A549 (cell line): ENCODE measurements at regions of chr3 and their contacts with region 1.

Region 1: DNA sequence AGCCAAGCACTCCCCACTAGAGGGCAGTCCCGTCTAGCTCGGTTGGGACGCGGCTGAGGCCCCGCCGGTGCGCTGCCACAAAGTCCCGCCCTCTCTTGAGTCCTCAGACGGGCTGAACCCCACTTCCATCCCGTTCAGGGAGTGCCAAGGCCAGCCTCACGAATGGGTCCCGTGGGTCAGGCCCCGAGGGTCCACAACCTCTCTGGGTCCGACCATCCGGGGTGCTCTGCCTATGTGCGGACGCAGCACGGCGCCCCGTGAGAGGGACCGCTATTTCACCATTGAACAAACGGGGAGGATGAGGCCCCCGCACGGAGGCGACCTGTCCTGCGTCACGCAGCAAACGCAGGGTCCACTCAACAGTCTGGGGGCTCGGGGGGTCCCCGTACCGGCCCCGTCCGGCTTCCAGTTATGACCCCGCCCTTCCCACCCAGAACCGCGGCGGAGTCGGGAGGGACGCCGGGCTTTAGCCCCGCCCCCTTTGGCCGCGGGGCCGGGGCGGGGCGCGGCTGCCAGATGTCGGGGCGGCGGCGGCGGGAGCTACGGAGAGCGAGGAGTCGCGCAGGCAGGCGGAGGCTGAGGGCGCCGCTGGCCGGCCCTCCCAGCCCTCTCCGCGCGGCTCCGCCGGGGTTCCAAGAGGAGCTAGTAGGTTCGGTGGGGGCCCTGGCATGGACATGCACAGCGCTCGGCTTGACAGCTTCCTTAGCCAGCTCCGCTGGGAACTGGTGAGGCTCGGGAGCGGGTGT is at the start of gene INKA1:
- DNase-seq: peak; percentile 70 to 81
- ATAC-seq: peak; percentile 78 to 85
- H3K4me3 ChIP-seq: peak within 1 kb of the TSS; percentile 80
- H3K27ac ChIP-seq: peak within 1 kb of the TSS; percentile 76 to 88
- H3K4me1 ChIP-seq: peaks cover 14% of the 10 kb centered on the region
- CTCF ChIP-seq: peak; percentile 68
- EP300 ChIP-seq: no peak
- POLR2A ChIP-seq: no peak
- RAD21 ChIP-seq: peak; percentile 75 to 82
- polyA plus RNA-seq, gene INKA1: 0.21 and 0.39 TPM in 2 replicates

Region 2: GRCh38 chr3:49638445-49638844 is 164.4 kb before region 1 on chr3:
- CTCF ChIA-PET with region 1: no interaction called
- POLR2A ChIA-PET with region 1: no interaction called
- DNase-seq: peak; percentile 6 to 57
- ATAC-seq: peak; percentile 55 to 86; a peak in 4 of 6 replicates
- H3K4me3 ChIP-seq: no peak overlapping the region
- H3K27ac ChIP-seq: peak overlapping the region in 1 of 2 experiments; percentile 49; a peak in 2 of 6 replicates
- H3K4me1 ChIP-seq: peaks cover 10% of the 10 kb centered on the region; the same call in 2 of the 3 replicates
- CTCF ChIP-seq: no peak
- EP300 ChIP-seq: no peak
- POLR2A ChIP-seq: no peak
- RAD21 ChIP-seq: no peak

Region 3: DNA sequence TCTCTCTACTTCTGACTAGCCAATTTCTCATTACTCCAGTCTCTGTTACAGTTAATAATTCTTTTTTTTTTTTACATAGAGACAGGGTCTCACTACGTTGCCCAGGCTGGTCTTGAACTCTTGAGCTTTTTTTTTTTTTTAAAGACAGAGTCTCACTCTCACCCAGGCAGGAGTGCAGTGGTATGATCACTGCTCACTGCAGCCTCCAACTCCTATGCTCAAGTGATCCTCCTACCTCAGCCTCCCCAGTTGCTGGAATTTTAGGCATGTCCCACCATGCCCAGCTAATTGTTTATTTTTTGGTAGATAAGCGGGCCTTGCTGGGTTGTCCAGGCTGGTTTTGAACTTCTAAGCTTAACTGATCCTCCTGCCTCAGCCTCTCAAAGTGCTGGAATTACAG is 30.2 kb before region 1 on chr3:
- CTCF ChIA-PET with region 1: interaction called, 14 read pairs
- POLR2A ChIA-PET with region 1: no interaction called
- DNase-seq: no peak
- ATAC-seq: no peak
- H3K4me3 ChIP-seq: no peak overlapping the region
- H3K27ac ChIP-seq: no peak overlapping the region
- H3K4me1 ChIP-seq: peaks cover 9% of the 10 kb centered on the region; the same call in 2 of the 3 replicates
- CTCF ChIP-seq: no peak
- EP300 ChIP-seq: no peak
- POLR2A ChIP-seq: no peak
- RAD21 ChIP-seq: no peak

Region 4: GRCh38 chr3:49786241-49786958 is 16.5 kb before region 1 on chr3 and contains the start of gene IP6K1:
- CTCF ChIA-PET with region 1: interaction called, 11 read pairs
- POLR2A ChIA-PET with region 1: interaction called, 12 read pairs
- DNase-seq: peak; percentile 98 to 99
- ATAC-seq: peak; percentile 98 to 99
- H3K4me3 ChIP-seq: peak within 1 kb of the TSS; percentile 82
- H3K27ac ChIP-seq: peak within 1 kb of the TSS; percentile 87 to 95
- H3K4me1 ChIP-seq: peaks cover 11% of the 10 kb centered on the region
- CTCF ChIP-seq: no peak
- EP300 ChIP-seq: no peak
- POLR2A ChIP-seq: peak; percentile 89
- RAD21 ChIP-seq: no peak
- polyA plus RNA-seq, gene IP6K1: 22.2 and 28.9 TPM in 2 replicates

Region 5: DNA sequence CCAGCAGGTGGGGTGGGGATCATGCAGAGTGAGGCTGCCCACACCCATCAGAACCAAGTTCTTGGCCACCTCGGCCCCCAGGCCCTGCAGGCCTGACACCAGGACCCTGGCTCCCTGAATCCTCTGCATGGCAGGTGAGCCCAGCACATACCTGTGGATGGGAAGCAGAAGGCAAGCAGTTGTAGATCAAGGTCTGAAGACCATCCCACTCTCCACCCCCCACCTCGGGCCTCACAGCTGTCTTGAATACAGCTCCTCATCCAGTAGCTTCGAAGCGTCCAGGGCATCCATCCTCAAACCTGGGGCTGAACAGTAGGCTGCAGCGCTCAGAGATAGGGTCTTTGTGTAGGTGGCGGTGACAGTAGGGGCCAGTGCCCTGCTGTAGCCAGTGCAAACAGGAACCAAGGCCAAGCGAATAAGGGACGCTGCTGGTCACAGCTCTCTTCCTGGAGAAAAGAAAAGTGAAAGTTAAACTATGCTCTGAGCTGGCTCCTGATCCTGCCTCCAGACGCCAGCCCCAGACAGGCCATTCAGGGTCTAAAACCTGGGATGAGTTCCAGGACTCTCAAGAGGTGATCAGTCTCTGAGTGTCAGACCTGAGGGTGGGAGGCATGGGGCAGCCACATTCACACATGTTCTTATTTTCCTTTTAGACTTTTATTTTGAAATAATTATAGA is 10.7 kb after region 1 on chr3 and contains the start of gene UBA7:
- CTCF ChIA-PET with region 1: interaction called, 19 read pairs
- POLR2A ChIA-PET with region 1: no interaction called
- DNase-seq: no peak
- ATAC-seq: peak in 1 of 2 experiments; percentile 35; a peak in 2 of 6 replicates
- H3K4me3 ChIP-seq: no peak within 1 kb of the TSS
- H3K27ac ChIP-seq: no peak within 1 kb of the TSS
- H3K4me1 ChIP-seq: no peaks in the 10 kb centered on the region
- CTCF ChIP-seq: no peak
- EP300 ChIP-seq: no peak
- POLR2A ChIP-seq: no peak
- RAD21 ChIP-seq: no peak
- polyA plus RNA-seq, gene UBA7: 0.22 and 0.33 TPM in 2 replicates

Region 6: DNA sequence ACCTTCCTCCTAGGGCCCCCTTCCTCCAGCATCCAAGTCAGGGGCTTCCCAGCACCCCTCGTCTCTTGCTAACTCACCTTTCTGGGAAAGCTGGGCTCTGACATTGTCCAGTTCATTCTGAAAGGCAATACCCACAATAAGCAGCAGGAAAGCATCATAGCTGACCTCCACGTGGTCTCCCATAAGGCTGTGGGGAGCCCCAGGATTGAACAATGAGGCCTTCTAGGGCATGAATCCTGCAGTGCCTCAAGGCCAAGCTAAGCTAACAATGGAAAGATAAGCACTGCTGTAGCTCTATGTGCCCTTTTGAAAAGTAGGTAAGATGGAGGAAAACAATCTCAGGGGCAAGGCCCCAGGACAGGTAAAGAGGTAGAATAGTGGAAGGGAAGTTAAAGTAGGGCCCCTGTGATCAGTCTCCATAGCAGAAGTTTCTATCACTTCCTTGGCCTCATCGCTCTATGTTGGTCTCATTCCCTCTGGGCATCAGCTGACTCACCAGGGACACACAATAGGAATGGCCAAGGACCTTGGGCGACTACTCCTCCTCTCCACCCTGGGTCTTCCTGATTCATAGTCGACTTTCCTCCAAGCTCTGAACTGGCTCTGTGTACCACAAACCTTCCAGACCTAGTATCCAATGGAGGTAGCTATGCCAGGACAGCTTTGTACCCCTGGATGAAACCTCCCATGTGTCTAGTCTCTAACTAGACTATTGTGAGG is 41.7 kb after region 1 on chr3:
- CTCF ChIA-PET with region 1: interaction called, 119 read pairs
- POLR2A ChIA-PET with region 1: no interaction called
- DNase-seq: no peak
- ATAC-seq: no peak
- H3K4me3 ChIP-seq: no peak overlapping the region
- H3K27ac ChIP-seq: no peak overlapping the region
- H3K4me1 ChIP-seq: no peaks in the 10 kb centered on the region
- CTCF ChIP-seq: no peak
- EP300 ChIP-seq: no peak
- POLR2A ChIP-seq: no peak
- RAD21 ChIP-seq: no peak

Region 7: GRCh38 chr3:49867400-49867799 is 64.5 kb after region 1 on chr3:
- CTCF ChIA-PET with region 1: no interaction called
- POLR2A ChIA-PET with region 1: no interaction called
- DNase-seq: no peak
- ATAC-seq: no peak
- H3K4me3 ChIP-seq: no peak overlapping the region
- H3K27ac ChIP-seq: no peak overlapping the region
- H3K4me1 ChIP-seq: peaks cover 6% of the 10 kb centered on the region; the same call in 1 of the 3 replicates
- CTCF ChIP-seq: no peak
- EP300 ChIP-seq: no peak
- POLR2A ChIP-seq: no peak
- RAD21 ChIP-seq: no peak

Region 8: GRCh38 chr3:49906004-49906743 is 103.3 kb after region 1 on chr3:
- CTCF ChIA-PET with region 1: interaction called, 26 read pairs
- POLR2A ChIA-PET with region 1: interaction called, 3 read pairs
- DNase-seq: peak; percentile 55 to 82
- ATAC-seq: peak; percentile 63 to 74; a peak in 5 of 6 replicates
- H3K4me3 ChIP-seq: peak overlapping the region; percentile 24; the same call in 1 of the 3 replicates
- H3K27ac ChIP-seq: peak overlapping the region; percentile 51 to 84
- H3K4me1 ChIP-seq: peaks cover 42% of the 10 kb centered on the region
- CTCF ChIP-seq: peak; percentile 74
- EP300 ChIP-seq: no peak
- POLR2A ChIP-seq: no peak
- RAD21 ChIP-seq: peak; percentile 81 to 83

Region 9: GRCh38 chr3:49929331-49930240 is 126.7 kb after region 1 on chr3 and contains the start of gene MON1A:
- CTCF ChIA-PET with region 1: interaction called, 10 read pairs
- POLR2A ChIA-PET with region 1: no interaction called
- DNase-seq: peak; percentile 64 to 86
- ATAC-seq: peak; percentile 95 to 96
- H3K4me3 ChIP-seq: peak within 1 kb of the TSS; percentile 68
- H3K27ac ChIP-seq: peak within 1 kb of the TSS; percentile 83 to 87
- H3K4me1 ChIP-seq: peaks cover 17% of the 10 kb centered on the region; the same call in 2 of the 3 replicates
- CTCF ChIP-seq: peak; percentile 25
- EP300 ChIP-seq: no peak
- POLR2A ChIP-seq: peak; percentile 22
- RAD21 ChIP-seq: 0 out of 5 replicates have a peak, but pooled peaks of 1 of the 2 experiments have one; percentile 29
- polyA plus RNA-seq, gene MON1A: 4.2 and 5.1 TPM in 2 replicates